ENCODE measurements at regions of chr2 and their contacts with region 1.

Region 1: GRCh38 chr2:111116843-111117597 is 3.7 kb upstream of the BCL2L11 start:
- DNase-seq: peak; percentile 70 to 86
- H3K4me3 ChIP-seq: peak overlapping the region; percentile 49 to 77
- H3K27ac ChIP-seq: peak overlapping the region; percentile 45 to 66
- H3K4me1 ChIP-seq: peaks cover 0 to 38% (median 22%) of the 10 kb centered on the region in 4 donors
- H3K27me3 ChIP-seq: peaks cover 0 to 11% of the 10 kb centered on the region in 2 donors
- CTCF ChIP-seq: peak; percentile 90 to 91

Region 2: DNA sequence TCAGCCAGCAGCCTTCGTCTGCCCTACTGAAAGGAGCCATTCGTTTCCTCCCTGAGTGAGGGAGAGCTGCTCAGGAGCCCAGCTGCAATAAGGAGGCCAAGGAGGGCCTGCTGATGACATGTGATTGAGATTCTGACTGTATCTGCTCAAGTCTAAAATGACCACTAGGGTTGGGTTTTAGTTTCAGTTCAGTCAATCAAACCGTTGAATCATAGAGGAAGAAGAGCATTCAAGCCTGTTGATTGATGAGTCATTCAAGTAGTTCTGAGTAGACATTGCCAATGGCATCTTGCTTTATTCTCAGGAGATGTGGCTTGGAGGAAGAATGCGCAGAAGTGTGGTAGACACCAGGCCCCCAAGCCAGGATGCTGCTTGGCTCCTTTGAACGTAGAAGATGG is 16.3 kb before region 1 on chr2:
- intact Hi-C with region 1: no loop called
- DNase-seq: no peak
- H3K4me3 ChIP-seq: no peak overlapping the region
- H3K27ac ChIP-seq: no peak overlapping the region
- H3K4me1 ChIP-seq: no peaks in the 10 kb centered on the region
- H3K27me3 ChIP-seq: no peaks in the 10 kb centered on the region
- CTCF ChIP-seq: no peak

Region 3: GRCh38 chr2:111667542-111668273 is 550.7 kb after region 1 on chr2:
- intact Hi-C with region 1: loop called (anchors 5 kb)
- DNase-seq: peak in 1 of 2 donors; percentile 39
- H3K4me3 ChIP-seq: no peak overlapping the region
- H3K27ac ChIP-seq: no peak overlapping the region
- H3K4me1 ChIP-seq: peaks cover 0 to 5% (median 2%) of the 10 kb centered on the region in 4 donors
- H3K27me3 ChIP-seq: no peaks in the 10 kb centered on the region
- CTCF ChIP-seq: peak; percentile 51 to 53

Region 4: DNA sequence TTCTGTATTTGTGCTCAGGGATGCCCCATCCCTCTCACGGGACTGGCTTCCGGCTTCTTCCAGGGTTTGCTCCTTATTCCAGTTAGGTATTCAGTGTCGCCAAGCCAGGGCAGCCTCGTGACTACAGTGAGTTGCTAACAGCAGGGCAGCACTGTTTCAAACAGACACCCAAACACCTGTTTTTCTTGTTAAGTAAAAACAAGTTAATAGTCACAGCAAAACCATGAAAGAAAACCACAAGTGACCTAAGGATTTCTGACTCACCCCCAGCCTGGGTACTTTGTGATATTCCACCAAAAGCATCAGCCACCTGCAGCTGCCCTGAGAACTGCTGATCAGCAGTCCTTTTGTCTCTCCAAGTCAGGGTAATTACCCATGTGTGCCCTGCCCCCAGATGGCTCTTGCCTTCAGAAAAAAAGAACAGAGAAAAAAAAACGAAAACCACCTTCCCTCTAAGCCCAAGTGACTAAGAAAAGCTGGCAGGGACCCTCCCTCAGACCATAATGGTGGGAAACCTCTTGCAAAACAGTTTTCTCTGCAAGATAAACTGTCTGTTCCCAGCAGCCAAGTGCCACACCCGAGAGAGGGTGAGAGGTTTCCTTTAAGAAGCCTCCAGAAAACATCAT is 588.8 kb after region 1 on chr2:
- intact Hi-C with region 1: loop called (anchors 10 kb)
- DNase-seq: no peak
- H3K4me3 ChIP-seq: no peak overlapping the region
- H3K27ac ChIP-seq: no peak overlapping the region
- H3K4me1 ChIP-seq: peaks cover 0 to 19% (median 10%) of the 10 kb centered on the region in 4 donors
- H3K27me3 ChIP-seq: no peaks in the 10 kb centered on the region
- CTCF ChIP-seq: no peak